PC-3 (cell line): ENCODE measurements at regions of chr12 and their contacts with region 1.

Region 1: DNA sequence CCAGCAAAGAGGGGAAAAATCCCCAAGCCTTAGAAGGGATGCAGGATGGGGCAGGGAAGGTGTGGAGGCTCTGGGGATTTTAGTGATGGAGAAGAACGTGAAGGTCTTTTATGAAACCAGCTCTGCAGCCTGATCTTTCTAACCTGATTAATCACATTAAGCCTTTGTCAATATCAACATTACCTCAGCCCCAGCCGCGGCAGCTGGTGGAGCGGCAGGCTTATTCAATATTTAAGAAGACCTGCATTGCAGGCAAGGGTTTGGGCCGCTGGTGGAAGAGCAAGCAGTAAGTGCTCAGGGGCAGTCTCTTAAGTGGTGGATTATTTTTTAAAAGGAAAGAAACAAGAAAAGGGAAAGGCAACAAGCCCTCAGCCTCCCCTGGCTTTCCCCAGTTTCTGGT is 16.6 kb downstream of the RPH3A start:
- DNase-seq: no peak
- ATAC-seq: no peak
- H3K4me3 ChIP-seq: no peak overlapping the region
- H3K27ac ChIP-seq: no peak overlapping the region
- H3K4me1 ChIP-seq: peaks cover 4% of the 10 kb centered on the region; the same call in 1 of the 2 replicates
- H3K27me3 ChIP-seq: peaks cover 60% of the 10 kb centered on the region
- CTCF ChIP-seq: no peak

Region 2: GRCh38 chr12:112439769-112440168 is 368.4 kb before region 1 on chr12:
- CTCF ChIA-PET with region 1: no interaction called
- POLR2A ChIA-PET with region 1: interaction called, 29 read pairs
- intact Hi-C with region 1: no loop called
- DNase-seq: no peak
- ATAC-seq: no peak
- H3K4me3 ChIP-seq: no peak overlapping the region
- H3K27ac ChIP-seq: no peak overlapping the region
- H3K4me1 ChIP-seq: no peaks in the 10 kb centered on the region
- H3K27me3 ChIP-seq: no peaks in the 10 kb centered on the region
- CTCF ChIP-seq: no peak